B cell (primary cell): ENCODE measurements at regions of chr1 and their contacts with region 1.

Region 1: DNA sequence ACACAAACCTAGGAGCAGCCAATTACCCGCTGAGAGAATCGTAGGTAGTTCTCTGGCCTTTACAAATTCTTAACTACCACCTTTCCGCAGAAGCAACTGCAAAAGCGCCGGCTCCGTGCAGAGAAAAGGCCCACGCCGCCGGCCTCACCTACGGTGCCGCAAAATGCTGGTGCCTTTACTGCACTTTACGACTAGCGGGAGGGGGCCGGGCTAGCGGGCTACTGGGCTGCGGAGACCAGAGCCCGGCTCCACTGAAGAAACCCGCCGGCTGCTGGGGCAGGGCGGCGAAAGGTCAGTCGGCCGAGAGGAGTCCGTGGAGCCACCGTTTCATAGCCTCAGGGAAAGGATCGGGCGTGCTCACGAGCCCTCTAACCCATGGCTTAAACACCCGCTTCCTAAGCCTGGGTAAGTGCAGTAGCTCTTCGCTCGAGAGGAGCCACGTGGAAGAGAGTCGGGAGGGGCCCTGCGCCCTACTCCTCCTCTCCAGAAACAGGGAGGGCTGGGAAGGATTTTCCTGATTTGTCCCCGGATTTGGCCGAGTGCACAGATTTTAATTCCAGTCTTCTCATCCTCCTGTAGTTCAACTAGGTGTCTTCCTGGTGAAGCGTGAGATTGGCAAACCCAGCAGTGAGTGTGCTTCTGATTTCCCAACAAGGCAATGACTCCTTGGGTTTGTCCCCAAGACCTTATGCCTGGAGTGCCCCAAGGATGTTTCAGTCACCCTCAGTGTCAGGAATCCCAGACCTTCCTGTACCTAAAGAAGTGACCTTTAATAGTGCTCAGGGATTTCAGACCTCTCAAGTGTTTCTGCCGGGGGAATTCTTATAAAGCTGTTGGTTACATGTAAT is at the start of gene DPH5:
- DNase-seq: peak; percentile 90
- ATAC-seq: peak; percentile 96
- H3K4me3 ChIP-seq: peak within 1 kb of the TSS; percentile 81 to 97 (median 92)
- H3K4me3 Mint-ChIP-seq: peak within 1 kb of the TSS; percentile 98
- H3K27ac ChIP-seq: peak within 1 kb of the TSS; percentile 78 to 85
- H3K27ac Mint-ChIP-seq: peak within 1 kb of the TSS; percentile 97
- H3K4me1 ChIP-seq: peaks cover 45 to 47% of the 10 kb centered on the region in 2 donors
- H3K4me1 Mint-ChIP-seq: peaks cover 50% of the 10 kb centered on the region
- H3K27me3 ChIP-seq: no peaks in the 10 kb centered on the region
- H3K27me3 Mint-ChIP-seq: no peaks in the 10 kb centered on the region
- CTCF ChIP-seq: no peak
- total RNA-seq, gene DPH5: 39.4 and 42.5 TPM in 2 replicates

Region 2: DNA sequence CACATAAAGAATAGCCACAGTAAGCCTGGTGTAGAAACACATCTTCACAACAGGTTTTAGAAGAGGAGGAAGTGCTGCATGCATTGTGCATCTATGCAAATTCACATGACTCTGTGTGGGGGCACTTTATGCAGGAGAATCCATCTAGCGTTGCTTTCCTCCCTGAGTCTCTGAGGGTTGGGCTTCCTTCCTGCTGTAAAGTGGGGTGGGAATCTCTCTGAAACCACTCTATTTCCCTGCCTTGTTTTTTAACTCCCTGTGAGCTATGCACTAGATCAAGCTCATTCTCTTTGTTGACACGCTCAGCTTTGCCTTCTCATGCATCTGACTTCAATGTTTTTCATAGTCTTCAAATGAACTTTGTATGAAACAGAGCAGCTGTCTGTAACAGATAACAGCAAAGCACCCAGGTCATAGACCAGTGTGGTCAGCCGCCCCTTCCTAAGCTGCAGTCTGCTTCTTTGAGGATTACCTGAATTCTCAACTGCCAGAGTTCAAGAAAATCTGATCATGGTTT is 102.4 kb after region 1 on chr1:
- CTCF ChIA-PET with region 1: no interaction called
- POLR2A ChIA-PET with region 1: no interaction called
- intact Hi-C with region 1: loop called (anchors 5 kb)
- DNase-seq: peak; percentile 75
- ATAC-seq: peak; percentile 93
- H3K4me3 ChIP-seq: peak overlapping the region in 3 of 5 experiments; percentile 37 to 59 (median 40)
- H3K4me3 Mint-ChIP-seq: peak overlapping the region; percentile 57
- H3K27ac ChIP-seq: peak overlapping the region; percentile 59 to 74
- H3K27ac Mint-ChIP-seq: peak overlapping the region; percentile 83
- H3K4me1 ChIP-seq: peaks cover 30 to 49% of the 10 kb centered on the region in 2 donors
- H3K4me1 Mint-ChIP-seq: peaks cover 60% of the 10 kb centered on the region
- H3K27me3 ChIP-seq: no peaks in the 10 kb centered on the region
- H3K27me3 Mint-ChIP-seq: no peaks in the 10 kb centered on the region
- CTCF ChIP-seq: no peak